ENCODE measurements at regions of chr16 and their contacts with region 1.

Region 1: GRCh38 chr16:88619859-88620815 is 18.2 kb upstream of the IL17C start:
- DNase-seq: peak; percentile 86
- H3K4me3 Mint-ChIP-seq: peak overlapping the region; percentile 55
- H3K27ac Mint-ChIP-seq: peak overlapping the region; percentile 93
- H3K4me1 Mint-ChIP-seq: peaks cover 57% of the 10 kb centered on the region
- H3K27me3 Mint-ChIP-seq: no peaks in the 10 kb centered on the region

Region 2: DNA sequence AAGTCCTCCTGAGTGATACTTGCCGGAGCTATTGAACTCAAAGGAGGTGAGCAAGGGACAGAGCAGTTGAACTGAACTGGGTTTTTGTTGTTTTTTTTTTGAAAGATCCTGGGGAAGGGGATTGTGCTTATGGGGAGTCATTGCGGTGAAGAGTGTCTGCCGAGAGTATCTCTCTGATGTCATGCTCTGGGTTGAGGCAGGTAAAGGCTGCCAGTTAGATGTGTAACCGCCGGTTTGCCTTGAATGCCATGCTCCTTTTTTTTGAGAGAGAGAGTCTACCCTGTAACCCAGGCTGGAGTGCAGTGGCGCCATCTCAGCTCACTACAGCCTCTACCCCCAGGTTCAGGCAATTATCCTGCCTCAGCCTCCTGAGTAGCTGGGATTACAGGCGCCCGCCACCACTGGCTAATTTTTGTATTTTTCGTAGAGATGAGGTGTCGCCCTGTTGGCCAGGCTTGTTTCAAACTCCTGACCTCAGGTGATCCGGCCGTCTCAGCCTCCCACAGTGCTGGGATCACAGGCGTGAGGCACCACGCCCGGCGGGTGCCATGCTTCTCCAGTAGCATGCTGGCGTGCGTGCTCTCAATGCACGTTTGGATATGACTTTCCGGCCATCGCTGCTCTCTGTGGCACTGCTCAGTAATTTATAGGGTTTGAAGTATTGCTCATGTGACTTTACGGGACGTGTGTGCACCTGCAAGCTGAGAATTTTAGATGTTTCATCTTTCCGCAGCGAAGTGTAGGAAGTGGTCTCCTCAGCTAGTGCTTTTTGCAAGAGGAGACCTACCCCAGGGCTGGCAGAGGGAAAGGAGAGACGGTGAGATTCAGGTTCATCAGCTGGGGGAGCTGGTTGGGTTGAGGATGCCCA is 41.5 kb before region 1 on chr16:
- CTCF ChIA-PET with region 1: no interaction called
- POLR2A ChIA-PET with region 1: no interaction called
- DNase-seq: no peak
- H3K4me3 Mint-ChIP-seq: no peak overlapping the region
- H3K27ac Mint-ChIP-seq: no peak overlapping the region
- H3K4me1 Mint-ChIP-seq: peaks cover 27% of the 10 kb centered on the region
- H3K27me3 Mint-ChIP-seq: no peaks in the 10 kb centered on the region

Region 3: DNA sequence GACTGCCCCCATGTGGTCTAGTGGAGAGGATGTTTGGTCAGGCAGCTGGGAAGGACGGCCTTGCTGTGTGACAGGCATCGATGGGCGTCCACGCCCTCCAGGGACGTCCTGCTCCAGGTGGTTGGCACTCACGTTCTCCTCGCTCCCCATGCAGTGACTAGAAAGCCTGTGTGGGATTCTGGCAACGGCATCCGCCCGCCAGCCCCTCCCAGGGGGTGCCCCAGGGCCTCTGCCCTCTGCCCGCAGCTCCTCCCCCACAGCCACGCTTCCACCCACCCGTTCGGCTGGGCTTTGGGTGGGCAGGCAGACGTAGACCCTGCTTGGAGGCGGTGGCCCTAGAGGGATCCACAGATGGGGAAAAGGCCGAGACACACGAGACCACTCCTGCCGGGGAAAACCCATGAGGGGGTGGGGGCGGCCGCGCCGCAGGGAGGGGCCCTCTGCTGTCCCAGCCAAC is 13.6 kb after region 1 on chr16:
- CTCF ChIA-PET with region 1: interaction called, 9 read pairs
- POLR2A ChIA-PET with region 1: interaction called, 21 read pairs
- DNase-seq: peak; percentile 71
- H3K4me3 Mint-ChIP-seq: peak overlapping the region; percentile 76
- H3K27ac Mint-ChIP-seq: peak overlapping the region; percentile 62
- H3K4me1 Mint-ChIP-seq: peaks cover 46% of the 10 kb centered on the region
- H3K27me3 Mint-ChIP-seq: peaks cover 20% of the 10 kb centered on the region

Region 4: GRCh38 chr16:88639231-88640038 is 19.3 kb after region 1 on chr16:
- CTCF ChIA-PET with region 1: interaction called, 4 read pairs
- POLR2A ChIA-PET with region 1: interaction called, 21 read pairs
- DNase-seq: no peak
- H3K4me3 Mint-ChIP-seq: no peak overlapping the region
- H3K27ac Mint-ChIP-seq: no peak overlapping the region
- H3K4me1 Mint-ChIP-seq: peaks cover 44% of the 10 kb centered on the region
- H3K27me3 Mint-ChIP-seq: peaks cover 35% of the 10 kb centered on the region

Measured in activated CD4-positive, alpha-beta memory T cell treated with anti-CD3 and anti-CD28 coated beads, Interleukin-2, amount 10 ng/mL, durations not matched to agents 7 days and 5 days (primary cell).